Dorsolateral prefrontal cortex (tissue), 120 donors: ENCODE measurements at regions of chr21 and their contacts with region 1.

Region 1: GRCh38 chr21:31343680-31344480 is at the start of gene TIAM1:
- DNase-seq: peak in 9 of 10 donors; percentile 43 to 78 (median 66)
- H3K4me3 ChIP-seq: peak within 1 kb of the TSS; percentile 40 to 82 (median 64)
- H3K27ac ChIP-seq: peak within 1 kb of the TSS in 18 of 59 donors; percentile 7 to 90 (median 35)
- H3K27me3 ChIP-seq: peaks cover 0 to 10% (median 0%) of the 10 kb centered on the region in 45 donors
- CTCF ChIP-seq: peak in 1 of 56 donors; percentile 14
- total RNA-seq, gene TIAM1: 53.4 to 115 (median 79.5) TPM

Region 2: DNA sequence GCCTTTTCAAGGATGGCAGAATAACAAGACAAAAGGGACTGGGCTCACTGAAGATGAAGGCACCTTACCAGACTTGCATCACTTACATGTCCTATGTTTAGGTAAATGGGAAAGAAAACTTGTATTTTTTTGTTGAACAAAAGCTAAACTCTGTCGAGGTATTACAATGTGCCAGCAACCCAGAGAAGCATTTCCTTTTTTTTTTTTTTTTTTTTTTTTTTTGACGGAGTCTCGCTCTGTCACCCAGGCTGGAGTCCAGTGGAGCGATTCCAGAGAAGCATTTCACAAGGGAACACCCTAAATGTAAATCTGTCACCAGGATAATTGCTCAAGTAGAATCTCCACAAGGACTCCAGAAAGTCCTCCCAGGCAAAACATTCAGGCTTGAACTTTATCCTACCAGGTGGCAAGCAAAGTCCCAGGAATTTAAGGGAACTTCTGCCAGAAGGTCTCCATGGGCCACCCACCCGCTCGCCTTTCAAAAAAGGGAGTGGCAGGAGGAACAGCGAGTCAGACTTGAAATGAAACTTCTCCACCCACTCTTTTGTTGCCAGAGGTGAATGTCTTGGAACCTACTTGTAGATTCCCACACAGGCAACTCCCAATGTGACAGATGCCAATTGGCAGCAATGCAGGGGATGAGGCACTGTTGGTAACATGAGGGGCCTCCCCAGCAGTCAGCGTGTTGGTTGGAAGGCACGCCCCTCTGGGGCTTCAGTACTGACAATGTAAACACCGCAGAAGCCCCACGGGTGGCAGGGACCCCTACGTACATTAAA is 124.9 kb before region 1 on chr21:
- intact Hi-C with region 1: loop called in 1 of 2 experiments (anchors 10 kb)
- DNase-seq: no peak
- H3K4me3 ChIP-seq: no peak overlapping the region
- H3K27ac ChIP-seq: peak overlapping the region in 1 of 59 donors; percentile 21
- H3K27me3 ChIP-seq: no peaks in the 10 kb centered on the region
- CTCF ChIP-seq: no peak

Region 3: GRCh38 chr21:31449921-31450535 is 106.1 kb after region 1 on chr21:
- intact Hi-C with region 1: loop called in 1 of 2 experiments (anchors 5 kb)
- DNase-seq: no peak
- H3K4me3 ChIP-seq: no peak overlapping the region
- H3K27ac ChIP-seq: peak overlapping the region in 46 of 59 donors; percentile 1 to 83 (median 52)
- H3K27me3 ChIP-seq: no peaks in the 10 kb centered on the region
- CTCF ChIP-seq: no peak

Region 4: GRCh38 chr21:31509194-31510017 is 165.5 kb after region 1 on chr21:
- intact Hi-C with region 1: loop called in 1 of 2 experiments (anchors 5 kb)
- DNase-seq: peak in 8 of 10 donors; percentile 36 to 71 (median 66)
- H3K4me3 ChIP-seq: no peak overlapping the region
- H3K27ac ChIP-seq: peak overlapping the region in 2 of 59 donors; percentile 7 to 29
- H3K27me3 ChIP-seq: no peaks in the 10 kb centered on the region
- CTCF ChIP-seq: peak in 17 of 56 donors; percentile 7 to 35 (median 18)